Common myeloid progenitor, CD34-positive (primary cell): ENCODE measurements at regions of chr10 and their contacts with region 1.

Region 1: GRCh38 chr10:124827474-124827873 is 25.9 kb downstream of the ABRAXAS2 start:
- DNase-seq: peak; percentile 26 to 61 (median 51)
- H3K4me3 ChIP-seq: no peak overlapping the region
- H3K27ac ChIP-seq: no peak overlapping the region
- H3K4me1 ChIP-seq: no peaks in the 10 kb centered on the region
- H3K27me3 ChIP-seq: no peaks in the 10 kb centered on the region

Region 2: DNA sequence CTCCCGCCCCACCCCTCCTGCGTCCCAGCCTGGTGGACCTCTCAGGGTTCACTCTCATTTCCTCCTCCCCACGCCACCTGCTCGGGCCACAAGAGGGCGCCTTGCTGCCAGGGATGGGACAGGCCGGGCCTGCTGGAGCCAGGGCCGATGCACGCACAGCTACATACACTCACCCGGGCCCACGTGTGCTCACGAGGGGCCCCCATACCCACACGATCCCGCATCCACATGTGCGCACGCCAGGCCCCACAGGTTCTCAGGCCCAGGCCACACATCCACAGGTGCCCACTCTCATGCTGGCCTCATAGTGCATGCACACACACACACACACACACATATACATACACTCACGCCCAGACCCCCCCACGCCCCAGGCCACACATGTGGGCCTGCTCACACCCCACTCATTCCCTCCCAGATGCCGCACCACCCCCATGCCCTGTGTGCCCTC is 297.2 kb before region 1 on chr10:
- CTCF ChIA-PET with region 1: interaction called, 14 read pairs
- POLR2A ChIA-PET with region 1: no interaction called
- DNase-seq: peak; percentile 80 to 87 (median 87)
- H3K4me3 ChIP-seq: no peak overlapping the region
- H3K27ac ChIP-seq: no peak overlapping the region
- H3K4me1 ChIP-seq: peaks cover 6 to 37% (median 20%) of the 10 kb centered on the region in 4 experiments
- H3K27me3 ChIP-seq: no peaks in the 10 kb centered on the region